ENCODE measurements at regions of chr22 and their contacts with region 1.

Region 1: GRCh38 chr22:42090596-42091454 is at the start of gene NDUFA6:
- DNase-seq: peak; percentile 99 to 100 (median 100)
- ATAC-seq: peak; percentile 97
- H3K4me3 ChIP-seq: peak within 1 kb of the TSS; percentile 39 to 88
- H3K27ac ChIP-seq: peak within 1 kb of the TSS; percentile 85 to 99 (median 98)
- H3K4me1 ChIP-seq: peaks cover 26% of the 10 kb centered on the region
- H3K27me3 ChIP-seq: no peaks in the 10 kb centered on the region
- CTCF ChIP-seq: peak; percentile 81 to 99 (median 99)
- POLR2A ChIP-seq: peak; percentile 91 to 97 (median 96)
- total RNA-seq, gene NDUFA6: 18.9 to 30.3 TPM

Region 2: DNA sequence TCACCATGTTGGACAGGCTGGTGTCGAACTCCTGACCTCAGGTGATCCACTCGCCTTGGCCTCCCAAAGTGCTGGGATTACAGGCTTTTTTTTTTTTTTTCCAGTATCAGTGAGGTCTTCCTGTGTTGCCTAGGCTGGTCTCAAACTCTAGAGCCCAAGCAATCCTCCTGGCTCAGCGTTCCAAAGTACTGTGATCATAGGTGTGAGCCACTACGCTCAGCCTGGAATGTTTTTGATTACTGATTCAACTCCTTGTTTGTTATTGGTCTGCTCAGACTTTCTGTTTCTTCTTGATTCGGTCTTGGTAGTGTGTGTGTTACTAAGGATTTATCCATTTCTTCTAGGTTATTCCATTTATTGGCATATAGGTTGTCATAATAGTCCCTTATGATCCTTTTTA is 51.6 kb before region 1 on chr22:
- intact Hi-C with region 1: no loop called
- DNase-seq: no peak
- ATAC-seq: no peak
- H3K4me3 ChIP-seq: no peak overlapping the region
- H3K27ac ChIP-seq: no peak overlapping the region
- H3K4me1 ChIP-seq: no peaks in the 10 kb centered on the region
- H3K27me3 ChIP-seq: no peaks in the 10 kb centered on the region
- CTCF ChIP-seq: no peak
- POLR2A ChIP-seq: no peak

Region 3: GRCh38 chr22:42369245-42370041 is 278.6 kb after region 1 on chr22:
- intact Hi-C with region 1: no loop called
- DNase-seq: peak; percentile 91 to 97 (median 96)
- ATAC-seq: peak; percentile 96
- H3K4me3 ChIP-seq: peak overlapping the region in 1 of 2 donors; percentile 21
- H3K27ac ChIP-seq: peak overlapping the region; percentile 23 to 73 (median 48)
- H3K4me1 ChIP-seq: peaks cover 45% of the 10 kb centered on the region
- H3K27me3 ChIP-seq: no peaks in the 10 kb centered on the region
- CTCF ChIP-seq: no peak
- POLR2A ChIP-seq: peak in 2 of 3 donors; percentile 62 to 64

Region 4: GRCh38 chr22:42399315-42400271 is 308.8 kb after region 1 on chr22:
- intact Hi-C with region 1: no loop called
- DNase-seq: peak in 3 of 4 donors; percentile 25 to 36 (median 29)
- ATAC-seq: peak; percentile 34
- H3K4me3 ChIP-seq: no peak overlapping the region
- H3K27ac ChIP-seq: no peak overlapping the region
- H3K4me1 ChIP-seq: no peaks in the 10 kb centered on the region
- H3K27me3 ChIP-seq: peaks cover 0 to 4% of the 10 kb centered on the region in 2 donors
- CTCF ChIP-seq: no peak
- POLR2A ChIP-seq: no peak

Region 5: GRCh38 chr22:42437488-42438292 is 346.9 kb after region 1 on chr22:
- intact Hi-C with region 1: loop called (anchors 10 kb)
- DNase-seq: peak; percentile 76 to 79 (median 77)
- ATAC-seq: peak; percentile 87
- H3K4me3 ChIP-seq: no peak overlapping the region
- H3K27ac ChIP-seq: peak overlapping the region; percentile 46 to 79 (median 74)
- H3K4me1 ChIP-seq: peaks cover 15% of the 10 kb centered on the region
- H3K27me3 ChIP-seq: no peaks in the 10 kb centered on the region
- CTCF ChIP-seq: peak; percentile 88 to 98 (median 95)
- POLR2A ChIP-seq: peak in 2 of 3 donors; percentile 47 to 50

Region 6: DNA sequence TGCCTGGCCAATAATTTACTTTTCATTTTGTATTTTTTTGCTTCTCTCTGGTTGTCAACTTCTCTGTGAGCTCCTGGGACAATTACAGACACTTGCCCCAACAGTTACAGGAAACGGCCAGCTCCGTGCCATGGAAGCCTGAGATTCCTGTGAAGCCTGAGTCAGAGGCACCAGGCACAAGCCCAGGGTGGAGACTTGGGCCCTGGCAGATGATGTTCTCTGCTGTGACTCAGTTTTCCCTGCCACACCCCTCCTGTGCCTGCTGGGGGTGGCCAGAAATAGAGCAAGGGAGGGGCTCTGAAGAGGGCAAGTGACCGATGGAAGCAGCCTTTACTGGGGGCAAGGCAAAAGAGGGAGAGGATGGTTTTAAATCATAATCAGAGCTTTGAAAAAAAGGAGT is 544.7 kb after region 1 on chr22:
- intact Hi-C with region 1: no loop called
- DNase-seq: no peak
- ATAC-seq: no peak
- H3K4me3 ChIP-seq: no peak overlapping the region
- H3K27ac ChIP-seq: no peak overlapping the region
- H3K4me1 ChIP-seq: no peaks in the 10 kb centered on the region
- H3K27me3 ChIP-seq: no peaks in the 10 kb centered on the region
- CTCF ChIP-seq: no peak
- POLR2A ChIP-seq: no peak

Measured in body of pancreas (tissue), 4 donors.